ENCODE measurements at regions of chr7 and their contacts with region 1.

Region 1: DNA sequence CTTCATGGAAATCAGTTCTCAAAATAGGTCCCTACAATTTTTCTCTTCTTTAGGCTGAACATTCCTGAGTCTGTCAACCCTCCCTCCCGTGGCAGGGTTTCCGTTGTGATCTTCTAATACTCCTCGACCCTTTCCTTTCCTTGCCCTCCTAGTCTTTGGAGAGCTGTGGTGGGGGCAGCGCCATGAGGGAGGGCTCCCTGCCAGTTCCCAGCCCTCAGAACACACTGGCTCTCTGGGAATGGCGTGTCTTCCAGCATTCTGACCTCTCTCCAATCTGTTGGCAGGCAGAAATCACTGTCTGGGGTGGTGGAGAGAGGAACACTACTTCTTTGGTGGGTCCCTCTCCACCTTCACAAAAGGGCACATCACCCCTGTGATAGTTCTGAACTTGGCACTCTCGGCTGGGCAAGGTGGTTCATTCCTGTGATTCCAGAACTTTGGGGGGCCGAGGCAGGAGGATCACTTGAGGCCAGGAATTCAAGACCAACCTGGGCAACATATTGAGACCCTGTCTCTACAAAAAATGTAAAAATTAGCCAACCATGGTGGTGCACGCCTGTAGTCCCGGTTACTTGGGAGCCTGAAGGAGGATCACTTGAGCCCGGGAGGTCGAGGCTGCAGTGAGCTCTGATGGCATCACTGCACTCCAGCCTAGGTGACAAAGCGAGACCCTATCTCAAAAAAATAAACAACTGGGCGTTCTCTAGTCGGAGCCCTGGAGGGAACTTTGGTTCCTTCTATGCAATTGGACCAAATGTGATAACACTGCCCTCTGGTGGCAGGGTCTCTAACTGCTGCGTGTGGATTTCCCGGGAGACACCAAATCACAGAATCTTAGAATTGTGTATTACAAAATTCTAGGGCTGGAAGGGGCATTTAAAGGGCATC is 13.1 kb upstream of the ARPC1A start:
- DNase-seq: peak; percentile 68 to 84
- H3K4me3 ChIP-seq: no peak overlapping the region
- H3K4me3 Mint-ChIP-seq: no peak overlapping the region
- H3K27ac Mint-ChIP-seq: no peak overlapping the region
- H3K4me1 ChIP-seq: no peaks in the 10 kb centered on the region
- H3K4me1 Mint-ChIP-seq: no peaks in the 10 kb centered on the region
- H3K27me3 ChIP-seq: no peaks in the 10 kb centered on the region
- H3K27me3 Mint-ChIP-seq: no peaks in the 10 kb centered on the region
- CTCF ChIP-seq: peak; percentile 90

Region 2: GRCh38 chr7:99040104-99040958 is 272.2 kb before region 1 on chr7:
- CTCF ChIA-PET with region 1: interaction called, 3 read pairs
- POLR2A ChIA-PET with region 1: no interaction called
- intact Hi-C with region 1: loop called (anchors 1 kb)
- DNase-seq: peak; percentile 82 to 86
- H3K4me3 ChIP-seq: no peak overlapping the region
- H3K4me3 Mint-ChIP-seq: no peak overlapping the region
- H3K27ac Mint-ChIP-seq: peak overlapping the region; percentile 87
- H3K4me1 ChIP-seq: no peaks in the 10 kb centered on the region
- H3K4me1 Mint-ChIP-seq: peaks cover 13% of the 10 kb centered on the region
- H3K27me3 ChIP-seq: no peaks in the 10 kb centered on the region
- H3K27me3 Mint-ChIP-seq: no peaks in the 10 kb centered on the region
- CTCF ChIP-seq: peak; percentile 62 to 76

Region 3: DNA sequence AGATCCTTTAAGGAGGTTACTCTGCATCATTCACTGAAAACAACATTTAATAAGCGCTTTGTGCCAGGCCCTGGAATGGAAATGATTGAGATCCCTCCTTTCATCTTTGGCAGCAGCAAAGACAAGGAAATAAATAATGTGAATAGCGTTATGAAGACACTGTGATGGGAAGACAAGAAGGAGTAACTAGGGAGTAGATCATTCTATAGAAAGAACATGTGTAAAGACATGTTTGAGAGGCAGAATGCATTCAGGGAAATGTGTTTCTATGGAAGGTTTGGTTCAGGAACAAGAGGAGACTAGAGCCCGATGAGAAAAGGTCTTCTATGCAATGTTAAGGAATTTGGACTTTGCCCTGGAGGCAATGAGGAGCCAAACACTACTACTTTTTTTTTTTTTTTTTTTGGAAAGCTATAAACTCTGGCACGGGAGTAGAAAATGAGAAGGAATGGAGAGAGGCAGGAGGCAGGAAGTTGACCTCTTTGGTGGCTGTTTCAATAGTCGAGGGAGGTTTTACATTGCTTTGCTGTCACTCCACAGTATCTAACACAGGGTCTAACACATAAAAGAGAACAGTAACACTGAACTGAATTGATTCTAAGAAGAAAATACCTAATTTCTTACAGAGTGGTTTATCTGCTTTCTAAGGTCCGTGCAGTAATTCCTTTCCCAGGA is 213.6 kb before region 1 on chr7:
- CTCF ChIA-PET with region 1: interaction called, 3 read pairs
- POLR2A ChIA-PET with region 1: no interaction called
- intact Hi-C with region 1: loop called (anchors 1 kb)
- DNase-seq: peak; percentile 59 to 80
- H3K4me3 ChIP-seq: no peak overlapping the region
- H3K4me3 Mint-ChIP-seq: peak overlapping the region; percentile 56
- H3K27ac Mint-ChIP-seq: peak overlapping the region; percentile 79
- H3K4me1 ChIP-seq: peaks cover 27% of the 10 kb centered on the region
- H3K4me1 Mint-ChIP-seq: peaks cover 31% of the 10 kb centered on the region
- H3K27me3 ChIP-seq: no peaks in the 10 kb centered on the region
- H3K27me3 Mint-ChIP-seq: no peaks in the 10 kb centered on the region
- CTCF ChIP-seq: no peak

Region 4: GRCh38 chr7:99143853-99144672 is 168.5 kb before region 1 on chr7 and contains the start of gene SMURF1:
- CTCF ChIA-PET with region 1: interaction called, 9 read pairs
- POLR2A ChIA-PET with region 1: no interaction called
- intact Hi-C with region 1: loop called (anchors 5 kb)
- DNase-seq: peak; percentile 55 to 80
- H3K4me3 ChIP-seq: peak within 1 kb of the TSS; percentile 83
- H3K4me3 Mint-ChIP-seq: peak within 1 kb of the TSS; percentile 83
- H3K27ac Mint-ChIP-seq: peak within 1 kb of the TSS; percentile 78
- H3K4me1 ChIP-seq: peaks cover 7% of the 10 kb centered on the region
- H3K4me1 Mint-ChIP-seq: peaks cover 16% of the 10 kb centered on the region
- H3K27me3 ChIP-seq: no peaks in the 10 kb centered on the region
- H3K27me3 Mint-ChIP-seq: no peaks in the 10 kb centered on the region
- CTCF ChIP-seq: no peak
- total RNA-seq, gene SMURF1: 22.5 and 23.0 TPM in 2 replicates

Region 5: GRCh38 chr7:99210264-99210970 is 102.1 kb before region 1 on chr7:
- CTCF ChIA-PET with region 1: no interaction called
- POLR2A ChIA-PET with region 1: no interaction called
- intact Hi-C with region 1: loop called (anchors 10 kb)
- DNase-seq: peak; percentile 46 to 80
- H3K4me3 ChIP-seq: no peak overlapping the region
- H3K4me3 Mint-ChIP-seq: peak overlapping the region; percentile 49
- H3K27ac Mint-ChIP-seq: peak overlapping the region; percentile 98
- H3K4me1 ChIP-seq: peaks cover 39% of the 10 kb centered on the region
- H3K4me1 Mint-ChIP-seq: peaks cover 24% of the 10 kb centered on the region
- H3K27me3 ChIP-seq: no peaks in the 10 kb centered on the region
- H3K27me3 Mint-ChIP-seq: no peaks in the 10 kb centered on the region
- CTCF ChIP-seq: no peak